ENCODE measurements at regions of chr15 and their contacts with region 1.

Region 1: GRCh38 chr15:64681424-64682024 is 93.9 kb downstream of the RBPMS2 start:
- DNase-seq: peak; percentile 61
- ATAC-seq: peak; percentile 97
- H3K4me3 ChIP-seq: no peak overlapping the region
- H3K27ac ChIP-seq: no peak overlapping the region
- H3K4me1 ChIP-seq: no peaks in the 10 kb centered on the region
- H3K27me3 ChIP-seq: no peaks in the 10 kb centered on the region
- CTCF ChIP-seq: peak; percentile 88 to 99 (median 91)
- POLR2A ChIP-seq: no peak
- RAD21 ChIP-seq: peak; percentile 98

Region 2: GRCh38 chr15:64162870-64163658 is 518.5 kb before region 1 on chr15 and contains the start of gene PPIB:
- CTCF ChIA-PET with region 1: no interaction called
- POLR2A ChIA-PET with region 1: no interaction called
- RAD21 ChIA-PET with region 1: no interaction called
- intact Hi-C with region 1: loop called (anchors 2 kb)
- DNase-seq: peak; percentile 88
- ATAC-seq: peak; percentile 95
- H3K4me3 ChIP-seq: peak within 1 kb of the TSS; percentile 85 to 97
- H3K27ac ChIP-seq: peak within 1 kb of the TSS; percentile 68
- H3K4me1 ChIP-seq: peaks cover 4 to 14% of the 10 kb centered on the region in 2 experiments; a peak in 3 of 4 replicates
- H3K27me3 ChIP-seq: no peaks in the 10 kb centered on the region
- CTCF ChIP-seq: peak; percentile 28 to 62 (median 52)
- POLR2A ChIP-seq: peak; percentile 48
- RAD21 ChIP-seq: peak; percentile 88
- total RNA-seq, gene PPIB: 453 TPM

Region 3: DNA sequence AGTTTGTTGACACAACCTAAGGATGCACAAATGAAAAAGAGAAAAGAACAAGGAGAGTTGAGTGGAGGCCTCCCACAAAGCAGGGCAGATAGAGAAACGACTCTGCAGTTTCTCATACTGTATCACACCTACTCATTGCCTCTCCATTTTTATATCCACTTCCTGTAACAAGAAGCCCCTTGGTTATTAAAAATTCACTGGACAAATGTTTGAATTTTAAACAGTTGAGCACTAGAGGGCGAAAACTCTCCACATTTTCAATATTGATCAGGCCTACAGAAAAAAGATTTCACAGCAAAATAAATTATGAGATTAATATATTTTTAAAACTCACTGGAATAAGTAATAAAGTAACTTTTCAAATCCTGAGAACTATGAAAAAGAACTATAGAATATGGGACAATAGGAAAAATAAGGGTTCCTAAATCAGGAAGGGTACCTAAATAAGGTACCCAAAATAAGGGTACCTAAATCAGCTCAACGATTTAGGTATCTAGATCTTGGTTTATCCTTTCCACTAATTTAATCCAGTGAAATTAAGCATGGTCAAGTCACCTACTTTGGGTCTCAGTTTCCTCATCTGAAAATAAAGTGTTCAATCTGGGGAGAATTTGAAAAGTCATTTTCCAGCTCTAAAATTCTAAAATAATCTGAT is 471.7 kb before region 1 on chr15:
- CTCF ChIA-PET with region 1: interaction called, 13 read pairs
- POLR2A ChIA-PET with region 1: no interaction called
- RAD21 ChIA-PET with region 1: no interaction called
- intact Hi-C with region 1: loop called (anchors 2 kb)
- DNase-seq: peak; percentile 33
- ATAC-seq: peak; percentile 66
- H3K4me3 ChIP-seq: no peak overlapping the region
- H3K27ac ChIP-seq: no peak overlapping the region
- H3K4me1 ChIP-seq: peaks cover 0 to 5% of the 10 kb centered on the region in 2 experiments; a peak in 1 of 4 replicates
- H3K27me3 ChIP-seq: no peaks in the 10 kb centered on the region
- CTCF ChIP-seq: peak; percentile 35 to 76 (median 58); a peak in 5 of 6 replicates
- POLR2A ChIP-seq: no peak
- RAD21 ChIP-seq: peak; percentile 80

Region 4: DNA sequence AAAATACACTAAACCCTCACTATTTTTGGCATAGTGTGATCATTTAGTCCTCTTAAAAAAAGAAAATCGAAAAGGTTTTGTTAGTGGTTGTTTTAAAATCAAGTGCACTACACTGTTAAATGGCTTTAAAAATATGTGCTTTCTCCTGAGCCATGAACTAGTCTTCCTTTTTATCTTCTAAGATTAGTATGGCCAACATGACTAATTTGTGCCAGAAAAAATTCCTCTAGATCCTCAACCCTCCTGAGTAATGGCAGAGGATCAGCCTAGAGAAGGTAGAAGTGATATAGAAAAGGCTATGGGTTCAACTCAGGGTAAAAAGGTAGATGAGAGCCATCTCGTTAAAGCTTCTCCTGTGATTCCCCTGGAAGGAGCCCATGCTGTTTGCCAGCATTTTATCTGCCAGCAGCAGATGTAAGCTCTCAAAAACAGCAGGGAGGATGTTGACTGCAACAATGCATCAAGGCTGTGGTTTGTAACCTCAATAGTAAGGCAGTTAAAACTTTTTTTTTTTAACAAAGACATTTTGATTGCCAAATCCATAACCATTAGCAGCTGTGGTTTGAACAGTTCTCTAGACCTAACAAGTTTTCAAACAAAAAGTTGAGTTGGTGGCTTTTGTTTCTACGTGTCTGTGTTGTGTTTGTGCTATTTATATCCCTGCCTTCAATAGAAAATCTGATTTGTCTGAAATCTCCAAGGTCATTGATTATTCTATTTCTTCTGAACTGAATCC is 251.4 kb before region 1 on chr15:
- CTCF ChIA-PET with region 1: interaction called, 4 read pairs
- POLR2A ChIA-PET with region 1: no interaction called
- RAD21 ChIA-PET with region 1: interaction called in 1 of 2 experiments, 3 read pairs
- intact Hi-C with region 1: loop called (anchors 1 kb)
- DNase-seq: no peak
- ATAC-seq: no peak
- H3K4me3 ChIP-seq: no peak overlapping the region
- H3K27ac ChIP-seq: no peak overlapping the region
- H3K4me1 ChIP-seq: peaks cover 7 to 8% of the 10 kb centered on the region in 2 experiments; a peak in 2 of 4 replicates
- H3K27me3 ChIP-seq: no peaks in the 10 kb centered on the region
- CTCF ChIP-seq: no peak
- POLR2A ChIP-seq: no peak
- RAD21 ChIP-seq: no peak

Region 5: GRCh38 chr15:64717735-64718495 is 36.4 kb after region 1 on chr15:
- CTCF ChIA-PET with region 1: no interaction called
- POLR2A ChIA-PET with region 1: no interaction called
- RAD21 ChIA-PET with region 1: interaction called in 1 of 2 experiments, 13 read pairs
- intact Hi-C with region 1: no loop called
- DNase-seq: no peak
- ATAC-seq: no peak
- H3K4me3 ChIP-seq: no peak overlapping the region
- H3K27ac ChIP-seq: no peak overlapping the region
- H3K4me1 ChIP-seq: no peaks in the 10 kb centered on the region
- H3K27me3 ChIP-seq: no peaks in the 10 kb centered on the region
- CTCF ChIP-seq: no peak
- POLR2A ChIP-seq: no peak
- RAD21 ChIP-seq: no peak

Measured in HCT116 (cell line).